ENCODE measurements at regions of chr2 and their contacts with region 1.

Region 1: GRCh38 chr2:14288016-14288415 is 344.5 kb upstream of the LRATD1 start:
- DNase-seq: peak; percentile 74 to 85
- H3K4me3 ChIP-seq: no peak overlapping the region
- CTCF ChIP-seq: no peak
- POLR2A ChIP-seq: no peak

Region 2: DNA sequence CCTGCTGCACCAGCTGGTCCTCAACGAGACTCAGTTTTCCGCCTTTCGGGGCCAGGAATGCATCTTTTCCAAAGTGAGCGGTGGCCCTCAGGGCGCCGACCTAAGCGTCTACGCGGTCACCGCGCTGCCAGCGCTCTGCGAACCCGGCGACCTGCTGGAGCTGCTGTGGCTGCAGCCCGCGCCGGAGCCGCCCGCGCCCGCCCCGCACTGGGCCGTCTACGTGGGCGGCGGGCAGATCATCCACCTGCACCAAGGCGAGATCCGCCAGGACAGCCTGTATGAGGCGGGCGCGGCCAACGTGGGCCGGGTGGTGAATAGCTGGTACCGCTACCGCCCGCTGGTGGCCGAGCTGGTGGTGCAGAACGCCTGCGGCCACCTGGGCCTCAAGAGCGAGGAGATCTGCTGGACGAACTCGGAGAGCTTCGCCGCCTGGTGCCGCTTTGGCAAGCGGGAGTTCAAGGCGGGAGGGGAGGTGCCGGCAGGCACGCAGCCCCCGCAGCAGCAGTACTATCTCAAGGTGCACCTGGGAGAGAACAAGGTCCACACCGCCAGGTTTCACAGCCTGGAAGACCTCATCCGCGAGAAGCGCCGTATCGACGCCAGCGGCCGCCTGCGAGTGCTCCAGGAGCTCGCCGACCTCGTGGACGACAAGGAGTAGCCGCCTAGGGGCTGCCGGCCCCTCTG is 346.3 kb after region 1 on chr2:
- intact Hi-C with region 1: loop called (anchors 10 kb)
- DNase-seq: peak; percentile 73 to 96
- H3K4me3 ChIP-seq: peak overlapping the region; percentile 33
- CTCF ChIP-seq: no peak
- POLR2A ChIP-seq: no peak

Region 3: GRCh38 chr2:15177103-15177502 is 889.1 kb after region 1 on chr2:
- intact Hi-C with region 1: no loop called
- DNase-seq: no peak
- H3K4me3 ChIP-seq: no peak overlapping the region
- CTCF ChIP-seq: no peak
- POLR2A ChIP-seq: no peak

Region 4: GRCh38 chr2:15275346-15275745 is 987.3 kb after region 1 on chr2:
- intact Hi-C with region 1: no loop called
- DNase-seq: no peak
- H3K4me3 ChIP-seq: no peak overlapping the region
- CTCF ChIP-seq: no peak
- POLR2A ChIP-seq: no peak